GM10248 (cell line): ENCODE measurements at regions of chr2 and their contacts with region 1.

Region 1: GRCh38 chr2:152925547-152926327 is 207.3 kb downstream of the ARL6IP6 start:
- DNase-seq: peak; percentile 39
- CTCF ChIP-seq: peak; percentile 91

Region 2: GRCh38 chr2:152336854-152337510 is 588.8 kb before region 1 on chr2:
- CTCF ChIA-PET with region 1: no interaction called
- POLR2A ChIA-PET with region 1: no interaction called
- DNase-seq: no peak
- CTCF ChIP-seq: no peak

Region 3: GRCh38 chr2:153519257-153519875 is 593.6 kb after region 1 on chr2:
- CTCF ChIA-PET with region 1: interaction called, 21 read pairs
- POLR2A ChIA-PET with region 1: no interaction called
- DNase-seq: peak; percentile 22
- CTCF ChIP-seq: peak; percentile 60